PC-9 (cell line): ENCODE measurements at regions of chr14 and their contacts with region 1.

Region 1: GRCh38 chr14:67837011-67837624 is 17.5 kb downstream of the RAD51B start:
- DNase-seq: peak; percentile 40 to 65
- H3K4me3 ChIP-seq: no peak overlapping the region
- H3K27ac ChIP-seq: no peak overlapping the region
- H3K4me1 ChIP-seq: no peaks in the 10 kb centered on the region
- H3K27me3 ChIP-seq: no peaks in the 10 kb centered on the region
- CTCF ChIP-seq: peak; percentile 79

Region 2: GRCh38 chr14:67934008-67934481 is 96.9 kb after region 1 on chr14:
- CTCF ChIA-PET with region 1: no interaction called
- POLR2A ChIA-PET with region 1: no interaction called
- intact Hi-C with region 1: loop called (anchors 1 kb)
- DNase-seq: peak in 1 of 2 experiments; percentile 64
- H3K4me3 ChIP-seq: no peak overlapping the region
- H3K27ac ChIP-seq: no peak overlapping the region
- H3K4me1 ChIP-seq: 0 out of 2 replicates have a peak, but pooled peaks cover 7% of the 10 kb centered on the region
- H3K27me3 ChIP-seq: no peaks in the 10 kb centered on the region
- CTCF ChIP-seq: peak; percentile 79

Region 3: DNA sequence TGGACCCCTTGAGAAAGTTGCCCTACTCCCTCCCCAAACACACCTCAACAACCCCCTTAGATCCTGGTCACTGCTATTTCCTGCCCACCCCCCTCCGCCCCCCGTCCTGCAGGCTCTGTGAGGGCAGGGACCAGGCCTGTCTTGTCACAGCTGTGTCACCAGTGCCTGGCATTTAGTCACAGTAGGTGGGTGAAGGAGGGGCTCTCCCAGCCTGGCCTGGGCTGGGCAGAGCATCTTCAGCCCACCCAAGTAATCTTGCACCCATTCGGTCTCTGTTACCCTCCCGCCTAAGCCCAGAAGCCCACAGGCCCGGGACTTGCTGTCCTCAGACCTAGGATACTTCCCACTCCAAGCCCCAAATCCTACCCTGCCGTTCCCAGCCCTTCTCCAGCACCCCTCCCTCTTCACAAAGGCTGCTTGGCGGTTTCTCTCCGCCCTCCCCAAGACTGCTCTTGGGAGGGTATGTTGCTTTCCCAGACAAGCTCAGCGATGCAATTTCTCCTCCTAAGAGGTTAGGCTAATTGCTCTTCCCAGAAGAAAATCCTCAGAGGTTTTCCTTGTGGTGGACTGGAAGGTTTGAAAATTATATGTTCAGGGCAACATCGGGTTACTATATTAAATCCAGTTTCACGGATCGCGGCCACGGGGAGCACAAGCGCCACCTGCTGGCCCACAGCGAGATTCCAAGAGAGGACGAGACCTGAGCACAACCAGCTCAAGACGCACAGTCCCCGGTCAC is 1006.5 kb after region 1 on chr14:
- CTCF ChIA-PET with region 1: interaction called, 7 read pairs
- POLR2A ChIA-PET with region 1: no interaction called
- intact Hi-C with region 1: loop called (anchors 5 kb)
- DNase-seq: peak in 1 of 2 experiments; percentile 74
- H3K4me3 ChIP-seq: no peak overlapping the region
- H3K27ac ChIP-seq: no peak overlapping the region
- H3K4me1 ChIP-seq: no peaks in the 10 kb centered on the region
- H3K27me3 ChIP-seq: no peaks in the 10 kb centered on the region
- CTCF ChIP-seq: peak; percentile 94

Region 4: DNA sequence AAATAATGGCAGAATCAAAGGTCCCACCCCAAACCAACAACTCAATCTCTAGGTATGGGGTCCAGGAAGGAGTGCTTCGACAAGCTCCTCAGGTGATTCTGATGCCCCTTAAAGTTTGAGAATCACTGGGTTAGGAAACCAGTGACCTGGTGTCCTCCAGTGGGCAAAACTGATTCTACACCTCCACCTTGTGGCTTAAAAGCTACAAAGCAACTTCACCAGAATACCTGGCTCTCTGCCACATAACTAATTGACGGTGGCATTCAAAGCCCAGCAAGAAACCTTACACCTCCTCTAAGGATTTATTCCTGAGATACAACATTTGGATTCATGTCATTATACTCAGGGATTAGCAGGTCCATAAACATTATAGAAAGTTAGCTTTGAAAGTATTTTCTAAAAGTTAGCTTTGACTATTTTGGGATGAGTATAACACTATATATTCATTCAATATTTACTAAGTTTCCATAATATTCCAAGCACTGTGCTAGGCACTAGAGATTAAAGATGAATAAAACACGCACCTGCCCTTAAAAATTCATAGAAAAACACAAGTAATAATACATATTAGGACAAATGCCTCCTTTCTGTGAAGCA is 1270.4 kb after region 1 on chr14:
- CTCF ChIA-PET with region 1: no interaction called
- POLR2A ChIA-PET with region 1: no interaction called
- intact Hi-C with region 1: loop called (anchors 10 kb)
- DNase-seq: peak; percentile 62 to 68
- H3K4me3 ChIP-seq: no peak overlapping the region
- H3K27ac ChIP-seq: no peak overlapping the region
- H3K4me1 ChIP-seq: no peaks in the 10 kb centered on the region
- H3K27me3 ChIP-seq: no peaks in the 10 kb centered on the region
- CTCF ChIP-seq: peak; percentile 90